ENCODE measurements at regions of chr15 and their contacts with region 1.

Region 1: DNA sequence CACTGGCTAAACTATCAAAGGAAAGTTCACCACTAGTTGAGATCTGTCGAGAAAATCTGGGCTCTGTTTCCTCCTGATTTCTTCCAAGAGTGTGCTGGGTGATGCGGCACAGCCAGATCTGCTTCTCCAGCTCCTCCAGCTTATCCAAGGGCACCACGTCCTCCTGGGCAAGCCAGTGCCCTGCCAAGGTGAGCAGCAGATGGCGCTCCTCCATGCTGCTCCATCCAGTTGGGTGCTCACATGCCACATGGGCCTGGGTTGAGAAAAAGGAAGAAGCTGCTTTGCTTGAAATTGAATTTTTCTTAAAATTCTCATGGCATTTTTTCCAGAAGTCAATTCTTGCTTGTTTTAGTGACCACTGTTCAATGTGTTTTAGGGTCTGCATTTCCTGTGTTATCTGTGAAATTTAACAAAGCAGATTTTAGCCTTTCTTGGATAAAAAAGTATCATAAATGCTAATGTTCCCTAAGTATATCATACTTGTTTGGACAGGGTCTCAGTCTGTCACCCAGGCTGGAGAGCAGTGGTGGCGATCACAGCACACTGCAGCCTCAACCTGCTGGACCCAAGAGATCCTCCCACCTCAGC is 47.3 kb downstream of the EIF3J start:
- DNase-seq: no peak
- H3K4me3 ChIP-seq: no peak overlapping the region
- H3K27me3 ChIP-seq: no peaks in the 10 kb centered on the region
- CTCF ChIP-seq: peak; percentile 51

Region 2: GRCh38 chr15:44489464-44489863 is 94.8 kb before region 1 on chr15:
- CTCF ChIA-PET with region 1: no interaction called
- POLR2A ChIA-PET with region 1: no interaction called
- DNase-seq: peak; percentile 64
- H3K4me3 ChIP-seq: no peak overlapping the region
- H3K27me3 ChIP-seq: no peaks in the 10 kb centered on the region
- CTCF ChIP-seq: no peak

Region 3: GRCh38 chr15:44536962-44537734 is 47.1 kb before region 1 on chr15 and contains the start of gene EIF3J:
- CTCF ChIA-PET with region 1: no interaction called
- POLR2A ChIA-PET with region 1: no interaction called
- DNase-seq: peak; percentile 77
- H3K4me3 ChIP-seq: peak within 1 kb of the TSS; percentile 92
- H3K27me3 ChIP-seq: no peaks in the 10 kb centered on the region
- CTCF ChIP-seq: no peak
- polyA plus RNA-seq, gene EIF3J: 22.5 and 54.4 TPM in 2 replicates

Region 4: GRCh38 chr15:44570361-44570760 is 13.9 kb before region 1 on chr15:
- CTCF ChIA-PET with region 1: interaction called, 16 read pairs
- POLR2A ChIA-PET with region 1: no interaction called
- DNase-seq: no peak
- H3K4me3 ChIP-seq: no peak overlapping the region
- H3K27me3 ChIP-seq: no peaks in the 10 kb centered on the region
- CTCF ChIP-seq: no peak

Region 5: DNA sequence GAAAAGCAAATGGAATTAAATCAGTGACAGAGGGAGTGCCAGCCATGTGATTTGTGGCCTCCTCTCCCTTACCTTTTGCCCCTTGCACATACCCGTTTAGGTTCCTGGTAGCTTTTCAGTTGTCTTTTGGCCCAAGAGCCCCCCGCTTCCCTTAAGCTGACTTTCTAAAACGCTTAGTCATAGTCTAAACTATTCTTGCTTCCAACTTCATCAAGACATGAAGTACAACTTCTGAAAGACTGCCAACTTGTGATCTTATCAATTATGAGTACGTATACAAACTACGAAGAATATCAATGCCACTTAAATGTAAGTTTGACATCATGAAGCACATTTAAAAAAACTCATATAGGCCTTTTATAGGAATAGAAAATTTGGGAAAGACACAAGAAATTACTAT is 14.6 kb after region 1 on chr15:
- CTCF ChIA-PET with region 1: interaction called, 18 read pairs
- POLR2A ChIA-PET with region 1: no interaction called
- DNase-seq: no peak
- H3K4me3 ChIP-seq: no peak overlapping the region
- H3K27me3 ChIP-seq: no peaks in the 10 kb centered on the region
- CTCF ChIP-seq: no peak